ENCODE measurements at regions of chrX and their contacts with region 1.

Region 1: GRCh38 chrX:49237060-49237459 is 1.8 kb downstream of the CCDC22 start:
- H3K4me3 Mint-ChIP-seq: peak overlapping the region; percentile 96
- H3K27ac Mint-ChIP-seq: peak overlapping the region; percentile 93
- H3K4me1 Mint-ChIP-seq: peaks cover 17% of the 10 kb centered on the region
- H3K27me3 Mint-ChIP-seq: no peaks in the 10 kb centered on the region

Region 2: DNA sequence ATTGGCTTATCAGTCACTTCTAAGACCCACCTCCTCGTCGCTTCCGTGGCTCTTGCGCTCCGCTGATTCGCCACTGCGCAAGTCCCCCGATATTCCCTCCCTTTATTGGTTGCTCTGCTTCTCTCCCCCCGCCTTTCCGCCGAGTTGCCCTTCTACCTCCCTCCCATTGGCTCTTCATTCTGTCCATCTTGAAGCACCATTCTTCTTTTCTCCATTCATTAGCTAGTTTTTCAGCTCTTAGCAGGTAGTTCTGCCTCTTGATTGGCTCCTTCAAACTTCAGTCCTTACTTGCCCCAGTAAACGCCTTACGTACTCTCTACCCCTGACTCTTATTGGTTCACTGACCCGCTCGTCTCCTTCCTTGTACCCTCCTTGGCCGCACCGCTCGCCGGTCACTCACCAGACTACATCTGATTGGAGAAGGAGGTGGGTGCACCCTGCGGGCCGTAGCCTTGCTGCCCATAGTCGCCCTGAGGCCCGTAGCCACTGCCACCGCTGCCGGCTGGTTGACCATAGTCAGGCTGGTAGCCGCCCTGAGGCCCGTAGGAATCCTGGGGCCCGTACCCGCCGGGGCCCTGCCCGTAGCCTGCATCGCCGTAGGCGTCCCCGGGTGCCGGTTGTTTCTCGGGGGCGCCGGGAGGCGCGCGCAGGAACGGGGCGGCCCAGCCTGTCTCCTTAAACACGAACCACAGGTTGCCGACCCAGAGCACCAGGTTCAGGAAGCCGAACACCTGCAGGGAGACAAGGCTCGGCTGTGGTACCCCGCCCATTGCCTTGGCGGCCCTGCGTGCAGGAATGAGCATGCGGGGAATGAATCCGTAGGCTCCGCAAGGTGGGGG is 45.8 kb before region 1 on chrX:
- intact Hi-C with region 1: loop called (anchors 5 kb)
- H3K4me3 Mint-ChIP-seq: peak overlapping the region; percentile 78
- H3K27ac Mint-ChIP-seq: peak overlapping the region; percentile 94
- H3K4me1 Mint-ChIP-seq: peaks cover 59% of the 10 kb centered on the region
- H3K27me3 Mint-ChIP-seq: no peaks in the 10 kb centered on the region

Region 3: DNA sequence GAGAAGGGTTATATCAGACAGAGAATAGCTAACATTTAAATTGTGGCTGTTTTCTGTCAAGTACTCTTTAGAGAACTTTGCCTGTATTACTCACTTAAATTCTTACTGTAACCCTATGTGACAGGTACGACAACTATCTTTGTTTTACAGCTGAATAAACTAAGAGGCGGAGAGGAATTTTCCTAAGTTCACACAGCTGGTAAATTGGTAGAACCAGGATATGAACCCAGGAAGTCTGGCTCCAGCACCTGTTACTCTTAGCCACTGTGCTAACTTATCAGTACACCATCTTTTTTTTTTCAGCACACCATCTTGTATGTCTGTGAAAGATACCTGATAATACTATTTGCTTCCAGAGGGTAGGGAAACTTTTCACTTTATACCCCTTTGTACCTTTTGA is 35.0 kb before region 1 on chrX:
- intact Hi-C with region 1: no loop called
- H3K4me3 Mint-ChIP-seq: no peak overlapping the region
- H3K27ac Mint-ChIP-seq: no peak overlapping the region
- H3K4me1 Mint-ChIP-seq: peaks cover 20% of the 10 kb centered on the region
- H3K27me3 Mint-ChIP-seq: peaks cover 22% of the 10 kb centered on the region

Region 4: DNA sequence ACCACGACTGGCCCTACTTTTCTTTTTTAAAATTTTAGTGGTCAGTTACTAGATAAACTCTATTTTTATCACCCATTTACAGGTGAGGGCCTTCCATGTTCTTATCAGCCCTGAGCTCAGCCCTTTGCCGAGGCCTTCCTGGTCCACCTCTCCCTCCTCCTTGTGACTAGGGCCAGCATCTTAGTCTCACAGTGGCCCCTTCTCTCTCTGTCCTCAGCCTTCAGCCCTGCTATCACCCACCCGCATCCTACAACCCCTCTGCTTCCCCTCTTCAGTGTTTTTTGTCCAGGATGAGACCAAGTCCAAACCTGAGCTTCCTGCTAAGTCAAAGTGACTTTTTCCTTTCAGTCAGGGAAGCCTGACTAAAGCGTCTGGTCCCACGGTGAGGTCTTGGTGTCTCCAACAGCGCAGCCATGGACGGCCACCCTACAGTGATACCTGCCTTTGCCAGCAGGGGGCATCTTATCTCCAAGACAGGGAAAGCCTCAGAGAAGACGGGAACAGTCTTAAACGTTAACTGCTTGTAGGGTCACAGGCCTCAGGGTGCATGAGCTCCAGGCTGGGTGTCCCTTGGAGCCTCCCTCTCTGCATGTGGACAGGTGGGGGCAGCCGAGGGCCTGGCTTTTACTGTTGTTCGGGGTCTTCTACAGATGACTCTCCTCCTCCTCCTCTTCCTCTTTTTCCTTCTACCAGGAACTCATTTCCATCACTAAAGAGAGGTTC is 54.7 kb after region 1 on chrX:
- intact Hi-C with region 1: no loop called
- H3K4me3 Mint-ChIP-seq: no peak overlapping the region
- H3K27ac Mint-ChIP-seq: peak overlapping the region; percentile 4
- H3K4me1 Mint-ChIP-seq: peaks cover 10% of the 10 kb centered on the region
- H3K27me3 Mint-ChIP-seq: peaks cover 7% of the 10 kb centered on the region

Measured in dendritic cell treated with granulocyte-macrophage colony-stimulating factor and Interleukin-4, amounts not matched to agents 40 ng/mL and 50 ng/mL, for 4 days (primary cell).